H1 (cell line): ENCODE measurements at regions of chr2 and their contacts with region 1.

Region 1: GRCh38 chr2:96760036-96760985 is at the start of gene CNNM4:
- DNase-seq: peak; percentile 80 to 91
- H3K4me3 ChIP-seq: peak within 1 kb of the TSS; percentile 49 to 68 (median 60)
- H3K27ac ChIP-seq: no peak within 1 kb of the TSS; the same call in 1 of the 2 replicates
- H3K4me1 ChIP-seq: peaks cover 11 to 41% (median 26%) of the 10 kb centered on the region in 4 experiments
- H3K27me3 ChIP-seq: peaks cover 0 to 8% (median 4%) of the 10 kb centered on the region in 4 experiments; a peak in 2 of 7 replicates
- CTCF ChIP-seq: peak in 1 of 3 experiments; percentile 0; a peak in 1 of 4 replicates
- EP300 ChIP-seq: no peak
- POLR2A ChIP-seq: peak in 1 of 2 experiments; percentile 70; a peak in 2 of 3 replicates
- RAD21 ChIP-seq: no peak; a peak in 1 of 4 replicates
- total RNA-seq, gene CNNM4: 10.7 and 11.0 TPM in 2 replicates

Region 2: DNA sequence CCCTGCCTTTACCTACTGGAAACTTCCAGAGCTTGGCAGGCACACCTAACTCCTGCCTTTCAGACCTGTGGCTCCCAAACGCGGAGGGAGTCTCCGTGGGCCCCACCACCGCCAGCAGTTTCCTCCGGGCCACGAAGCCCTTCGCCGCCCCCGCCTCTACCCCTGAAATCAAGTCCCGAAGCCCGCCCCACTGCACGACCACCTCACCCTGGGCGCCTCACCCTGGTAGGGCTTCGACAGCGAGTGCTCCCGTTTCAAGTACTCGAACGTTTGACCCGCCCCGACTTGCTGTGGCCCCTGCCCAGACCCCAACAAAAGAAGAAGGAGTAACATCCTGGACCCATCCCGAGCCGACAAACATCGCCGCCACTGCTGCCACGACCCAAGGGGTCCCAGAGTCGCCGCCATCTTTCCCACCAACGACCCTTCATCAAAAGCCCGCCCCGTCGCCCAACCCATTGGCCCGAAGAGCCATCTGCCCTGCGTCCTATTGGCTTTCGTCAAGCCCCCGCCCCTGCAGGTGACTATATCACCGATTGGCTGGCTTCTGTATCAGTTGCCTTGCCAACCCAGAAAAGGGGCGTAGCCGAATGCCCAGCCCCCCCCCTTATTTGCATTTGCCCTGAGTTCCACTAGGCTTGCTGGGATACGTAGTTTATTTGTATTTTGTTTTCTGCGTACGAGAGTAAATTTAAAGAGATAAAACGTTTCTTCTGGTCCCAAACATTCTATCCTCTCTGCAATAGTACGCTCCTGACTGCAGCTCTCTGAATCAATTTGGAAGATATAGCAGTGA is 20.5 kb before region 1 on chr2 and contains the start of gene LMAN2L:
- CTCF ChIA-PET with region 1: interaction called, 11 read pairs
- POLR2A ChIA-PET with region 1: interaction called, 4 read pairs
- DNase-seq: peak; percentile 85 to 92
- H3K4me3 ChIP-seq: peak within 1 kb of the TSS; percentile 66 to 97 (median 77)
- H3K27ac ChIP-seq: peak within 1 kb of the TSS; percentile 53
- H3K4me1 ChIP-seq: peaks cover 0 to 3% (median 1%) of the 10 kb centered on the region in 4 experiments; a peak in 3 of 7 replicates
- H3K27me3 ChIP-seq: no peaks in the 10 kb centered on the region
- CTCF ChIP-seq: no peak
- EP300 ChIP-seq: no peak
- POLR2A ChIP-seq: peak in 1 of 2 experiments; percentile 79; a peak in 1 of 3 replicates
- RAD21 ChIP-seq: no peak
- total RNA-seq, gene LMAN2L: 14.3 and 15.7 TPM in 2 replicates

Region 3: DNA sequence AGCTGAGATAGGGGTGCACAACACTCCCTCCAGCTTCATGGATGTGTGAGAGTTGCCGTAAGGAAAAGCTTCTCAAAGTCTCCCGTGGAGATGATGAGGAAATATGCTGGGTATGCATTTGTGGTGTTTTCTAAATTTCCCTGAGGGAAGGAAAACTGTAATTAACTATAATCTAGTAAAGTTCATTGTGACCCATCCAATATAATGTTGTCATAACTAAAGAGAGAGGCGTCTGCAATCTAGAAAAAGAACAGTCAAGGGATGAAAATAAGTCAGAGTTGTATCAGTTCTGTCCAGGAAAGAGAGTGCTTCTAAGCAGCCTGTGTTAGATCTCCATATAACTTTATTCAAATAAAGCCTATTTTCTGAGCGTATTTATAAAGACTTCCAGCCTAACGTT is 13.2 kb before region 1 on chr2:
- CTCF ChIA-PET with region 1: interaction called, 16 read pairs
- POLR2A ChIA-PET with region 1: interaction called, 6 read pairs
- DNase-seq: no peak
- H3K4me3 ChIP-seq: no peak overlapping the region
- H3K27ac ChIP-seq: no peak overlapping the region
- H3K4me1 ChIP-seq: peaks cover 0 to 3% (median 0%) of the 10 kb centered on the region in 4 experiments; a peak in 1 of 7 replicates
- H3K27me3 ChIP-seq: no peaks in the 10 kb centered on the region
- CTCF ChIP-seq: no peak
- EP300 ChIP-seq: no peak
- POLR2A ChIP-seq: no peak
- RAD21 ChIP-seq: no peak

Region 4: GRCh38 chr2:96773922-96774321 is 13.6 kb after region 1 on chr2:
- CTCF ChIA-PET with region 1: interaction called, 64 read pairs
- POLR2A ChIA-PET with region 1: interaction called, 7 read pairs
- DNase-seq: no peak
- H3K4me3 ChIP-seq: no peak overlapping the region
- H3K27ac ChIP-seq: peak overlapping the region; percentile 58; the same call in 1 of the 2 replicates
- H3K4me1 ChIP-seq: peaks cover 0 to 4% (median 0%) of the 10 kb centered on the region in 4 experiments; a peak in 3 of 7 replicates
- H3K27me3 ChIP-seq: no peaks in the 10 kb centered on the region
- CTCF ChIP-seq: 0 out of 4 replicates have a peak, but pooled peaks of 1 of the 3 experiments have one; percentile 1
- EP300 ChIP-seq: no peak
- POLR2A ChIP-seq: no peak
- RAD21 ChIP-seq: no peak

Region 5: GRCh38 chr2:96801005-96801785 is 40.9 kb after region 1 on chr2:
- CTCF ChIA-PET with region 1: interaction called, 46 read pairs
- POLR2A ChIA-PET with region 1: interaction called, 8 read pairs
- DNase-seq: peak; percentile 56 to 89
- H3K4me3 ChIP-seq: no peak overlapping the region
- H3K27ac ChIP-seq: peak overlapping the region; percentile 68; the same call in 1 of the 2 replicates
- H3K4me1 ChIP-seq: no peaks in the 10 kb centered on the region; a peak in 2 of 7 replicates
- H3K27me3 ChIP-seq: no peaks in the 10 kb centered on the region
- CTCF ChIP-seq: peak; percentile 71 to 100 (median 95)
- EP300 ChIP-seq: no peak
- POLR2A ChIP-seq: no peak
- RAD21 ChIP-seq: peak; percentile 85 to 86

Region 6: DNA sequence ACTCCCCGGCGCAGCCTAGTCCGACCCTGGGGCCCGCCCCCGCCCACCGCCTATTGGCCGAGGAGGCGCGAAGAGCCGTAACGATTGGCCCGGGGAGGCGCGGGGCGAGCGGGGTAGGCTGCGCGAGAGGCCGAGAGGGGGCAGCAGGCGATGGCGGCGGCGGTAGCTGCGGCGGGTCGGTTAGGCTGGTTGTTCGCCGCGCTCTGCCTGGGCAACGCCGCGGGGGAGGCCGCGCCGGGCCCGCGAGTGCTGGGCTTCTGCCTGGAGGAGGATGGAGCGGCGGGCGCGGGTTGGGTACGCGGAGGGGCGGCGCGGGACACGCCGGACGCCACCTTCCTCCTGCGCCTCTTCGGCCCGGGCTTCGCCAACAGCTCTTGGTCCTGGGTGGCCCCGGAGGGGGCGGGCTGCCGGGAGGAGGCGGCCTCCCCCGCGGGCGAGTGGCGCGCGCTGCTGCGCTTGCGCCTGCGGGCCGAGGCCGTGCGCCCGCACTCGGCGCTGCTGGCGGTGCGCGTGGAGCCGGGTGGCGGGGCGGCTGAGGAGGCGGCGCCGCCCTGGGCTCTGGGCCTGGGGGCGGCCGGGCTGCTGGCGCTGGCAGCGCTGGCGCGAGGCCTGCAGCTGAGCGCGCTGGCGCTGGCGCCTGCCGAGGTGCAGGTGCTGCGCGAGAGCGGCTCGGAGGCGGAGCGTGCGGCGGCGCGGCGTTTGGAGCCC is 56.0 kb after region 1 on chr2 and contains the start of gene CNNM3:
- CTCF ChIA-PET with region 1: interaction called, 14 read pairs
- POLR2A ChIA-PET with region 1: interaction called, 11 read pairs
- DNase-seq: peak; percentile 64 to 98
- H3K4me3 ChIP-seq: peak within 1 kb of the TSS; percentile 65 to 89 (median 72)
- H3K27ac ChIP-seq: peak within 1 kb of the TSS; percentile 85; the same call in 1 of the 2 replicates
- H3K4me1 ChIP-seq: peaks cover 0 to 22% (median 16%) of the 10 kb centered on the region in 4 experiments; a peak in 6 of 7 replicates
- H3K27me3 ChIP-seq: no peaks in the 10 kb centered on the region; a peak in 1 of 7 replicates
- CTCF ChIP-seq: peak; percentile 26 to 76 (median 66); a peak in 3 of 4 replicates
- EP300 ChIP-seq: no peak
- POLR2A ChIP-seq: 0 out of 3 replicates have a peak, but pooled peaks of 1 of the 2 experiments have one; percentile 25
- RAD21 ChIP-seq: peak in 1 of 2 experiments; percentile 13; a peak in 2 of 4 replicates
- total RNA-seq, gene CNNM3: 29.2 and 29.9 TPM in 2 replicates